Mucosa of descending colon (tissue), 3 donors: ENCODE measurements at regions of chr2 and their contacts with region 1.

Region 1: DNA sequence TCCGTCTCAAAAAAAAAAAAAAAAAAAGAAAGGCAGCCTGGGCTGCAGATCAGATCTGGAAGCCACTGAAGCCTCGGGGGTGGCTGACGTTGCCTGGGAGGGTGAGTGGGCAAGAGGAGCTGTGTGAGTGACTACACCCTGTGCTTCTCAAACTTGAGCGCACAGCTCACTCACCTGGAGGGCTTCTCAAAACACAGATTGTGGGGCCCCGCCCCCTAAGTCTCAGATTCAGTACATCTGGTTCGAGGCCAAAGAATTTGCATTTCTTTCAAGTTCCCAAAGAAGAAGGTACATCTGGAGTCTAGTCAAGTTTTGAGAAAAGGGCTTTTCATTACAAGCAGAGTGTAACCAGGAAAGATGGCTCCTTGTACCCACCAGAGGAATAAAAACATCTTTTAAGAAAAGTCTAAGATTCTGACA is 97.7 kb upstream of the CAB39 start:
- DNase-seq: peak in 2 of 3 donors; percentile 52 to 71
- ATAC-seq: peak; percentile 57
- H3K4me3 ChIP-seq: no peak overlapping the region
- H3K4me1 ChIP-seq: no peaks in the 10 kb centered on the region
- CTCF ChIP-seq: no peak

Region 2: DNA sequence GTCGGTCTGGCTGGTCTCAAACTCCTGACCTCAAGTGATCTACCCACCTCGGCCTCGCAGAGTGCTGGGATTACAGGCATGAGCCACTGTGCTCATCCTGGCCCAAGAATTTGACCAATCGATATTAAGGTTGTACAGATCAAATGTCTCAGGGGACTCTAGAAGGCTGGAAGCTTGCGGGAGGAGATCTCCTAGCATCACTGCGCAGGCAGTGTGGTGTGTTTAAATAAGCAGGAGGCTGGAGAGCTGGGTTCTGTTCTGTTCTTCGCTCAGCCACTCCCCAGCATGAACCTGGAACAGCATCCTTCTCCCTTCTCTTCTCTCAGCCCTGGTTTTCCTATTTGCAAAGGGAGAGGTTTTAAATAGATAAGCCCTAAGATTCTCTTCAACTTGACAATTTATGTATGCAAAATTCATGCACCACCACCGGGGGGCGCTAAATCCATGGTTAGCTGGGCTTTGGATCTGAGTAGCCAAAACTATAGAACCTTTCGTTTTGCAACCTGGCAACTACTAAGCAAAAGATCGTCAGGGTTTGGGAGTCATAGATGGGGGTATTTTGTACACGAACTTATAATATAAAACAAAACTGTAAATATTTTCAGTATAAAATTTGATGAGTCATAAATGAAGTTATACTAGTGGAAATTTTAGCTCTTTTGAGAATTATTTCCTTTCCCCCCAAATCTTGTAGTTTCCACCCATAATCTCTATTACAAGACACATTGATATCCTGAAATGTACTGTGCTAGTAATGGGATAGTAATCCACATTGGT is 606.8 kb before region 1 on chr2:
- intact Hi-C with region 1: loop called in 1 of 2 experiments (anchors 5 kb)
- DNase-seq: peak; percentile 65 to 89 (median 84)
- ATAC-seq: peak; percentile 87
- H3K4me3 ChIP-seq: no peak overlapping the region
- H3K4me1 ChIP-seq: no peaks in the 10 kb centered on the region
- CTCF ChIP-seq: peak; percentile 63

Region 3: DNA sequence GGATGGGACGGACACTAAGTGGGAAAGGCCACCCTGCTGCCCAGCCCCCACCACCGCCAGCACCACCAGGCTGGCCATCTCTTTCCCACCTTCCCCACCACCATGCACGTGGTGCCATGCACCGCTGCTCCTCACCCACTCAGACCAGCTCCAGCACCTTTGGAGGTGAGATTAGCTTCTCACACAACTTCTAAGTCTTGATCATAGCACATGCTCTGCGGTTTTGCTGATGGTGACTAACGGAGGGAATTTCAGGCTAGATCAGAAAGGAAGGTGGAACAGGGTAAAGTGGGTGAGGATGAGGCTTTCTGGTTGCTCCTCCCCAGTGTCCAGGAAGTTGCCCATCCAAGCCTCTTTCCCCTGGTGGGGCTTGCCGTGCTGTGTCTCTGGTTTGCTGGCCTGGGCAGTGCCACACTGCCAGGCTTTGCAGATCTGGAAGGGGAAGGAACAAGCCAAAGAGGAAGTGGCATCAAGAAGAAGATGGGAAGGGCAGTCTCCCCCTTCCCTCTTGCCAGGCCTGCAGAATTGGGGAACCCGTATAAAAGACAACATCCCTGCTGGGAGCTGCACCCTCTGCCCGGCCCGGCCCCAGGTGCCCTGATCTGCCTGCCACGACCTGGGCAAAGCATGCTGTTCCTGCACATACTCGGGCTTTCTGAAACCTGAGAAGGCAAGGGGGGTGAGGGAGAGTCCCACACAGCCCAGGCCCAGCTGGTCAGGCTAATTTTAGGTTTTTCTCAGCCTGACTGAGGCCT is 53.4 kb after region 1 on chr2:
- intact Hi-C with region 1: no loop called
- DNase-seq: no peak
- ATAC-seq: peak; percentile 26
- H3K4me3 ChIP-seq: no peak overlapping the region
- H3K4me1 ChIP-seq: peaks cover 18% of the 10 kb centered on the region
- CTCF ChIP-seq: no peak

Region 4: DNA sequence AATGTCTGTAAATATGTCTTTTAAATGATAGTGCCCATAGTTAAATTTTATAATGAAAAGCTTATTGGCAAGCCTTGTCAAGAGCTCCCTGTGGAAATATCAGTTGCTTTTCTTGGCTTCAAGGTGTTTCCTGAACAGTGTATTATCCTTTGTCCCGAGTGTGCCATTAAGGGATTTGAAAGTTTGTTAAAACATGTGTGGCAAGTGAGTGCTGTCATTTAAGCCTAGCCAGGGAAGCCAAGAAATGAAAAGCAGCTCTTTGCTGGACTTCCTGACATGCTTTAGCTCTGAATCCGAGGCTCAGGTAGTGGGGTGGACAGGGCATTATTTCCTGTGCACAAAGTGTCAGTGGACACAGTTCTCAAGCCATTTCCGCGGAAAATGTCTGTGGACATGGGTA is 1458.1 kb after region 1 on chr2:
- intact Hi-C with region 1: no loop called
- DNase-seq: no peak
- ATAC-seq: no peak
- H3K4me3 ChIP-seq: no peak overlapping the region
- H3K4me1 ChIP-seq: no peaks in the 10 kb centered on the region
- CTCF ChIP-seq: no peak